GM12878 (cell line): ENCODE measurements at regions of chr3 and their contacts with region 1.

Region 1: DNA sequence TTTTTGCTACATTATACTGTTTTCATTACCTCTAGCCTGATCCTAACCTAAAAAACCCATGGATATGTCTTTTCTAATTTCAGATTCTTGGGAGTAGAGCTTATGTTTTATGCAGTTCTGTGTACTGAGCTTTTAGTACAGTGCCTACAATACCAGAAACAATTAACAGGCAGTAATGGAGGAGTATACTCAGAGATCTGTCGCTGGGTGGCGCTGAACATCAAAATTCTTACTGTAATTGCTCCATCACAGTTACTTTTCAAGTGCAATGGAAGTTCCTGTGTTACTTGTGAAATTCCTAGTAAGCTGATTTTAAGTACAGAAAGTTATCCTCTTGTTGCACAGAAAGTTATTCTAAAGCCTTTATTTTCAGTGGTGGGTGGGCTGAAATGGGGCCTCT is 66.9 kb downstream of the RNF13 start:
- DNase-seq: no peak
- ATAC-seq: peak; percentile 95
- H3K4me3 ChIP-seq: no peak overlapping the region
- H3K27ac ChIP-seq: no peak overlapping the region
- H3K4me1 ChIP-seq: no peaks in the 10 kb centered on the region
- H3K27me3 ChIP-seq: no peaks in the 10 kb centered on the region
- CTCF ChIP-seq: peak; percentile 43 to 59 (median 55); a peak in 5 of 6 replicates
- EP300 ChIP-seq: no peak
- POLR2A ChIP-seq: no peak
- RAD21 ChIP-seq: peak; percentile 30; the same call in 1 of the 2 replicates

Region 2: GRCh38 chr3:149867563-149867962 is 12.3 kb before region 1 on chr3:
- CTCF ChIA-PET with region 1: interaction called, 13 read pairs
- POLR2A ChIA-PET with region 1: no interaction called
- RAD21 ChIA-PET with region 1: no interaction called
- SMC1A ChIA-PET with region 1: interaction called, 5 read pairs
- in situ Hi-C with region 1: no loop called
- intact Hi-C with region 1: no loop called
- DNase-seq: no peak
- ATAC-seq: no peak
- H3K4me3 ChIP-seq: no peak overlapping the region
- H3K27ac ChIP-seq: no peak overlapping the region
- H3K4me1 ChIP-seq: no peaks in the 10 kb centered on the region
- H3K27me3 ChIP-seq: no peaks in the 10 kb centered on the region
- CTCF ChIP-seq: no peak
- EP300 ChIP-seq: no peak
- POLR2A ChIP-seq: no peak
- RAD21 ChIP-seq: no peak

Region 3: GRCh38 chr3:149894205-149894604 is 14.3 kb after region 1 on chr3:
- CTCF ChIA-PET with region 1: interaction called, 22 read pairs
- POLR2A ChIA-PET with region 1: interaction called, 6 read pairs
- RAD21 ChIA-PET with region 1: no interaction called
- SMC1A ChIA-PET with region 1: interaction called, 4 read pairs
- in situ Hi-C with region 1: no loop called
- intact Hi-C with region 1: no loop called
- DNase-seq: no peak
- ATAC-seq: no peak
- H3K4me3 ChIP-seq: no peak overlapping the region
- H3K27ac ChIP-seq: no peak overlapping the region
- H3K4me1 ChIP-seq: no peaks in the 10 kb centered on the region
- H3K27me3 ChIP-seq: no peaks in the 10 kb centered on the region
- CTCF ChIP-seq: no peak
- EP300 ChIP-seq: no peak
- POLR2A ChIP-seq: no peak
- RAD21 ChIP-seq: no peak

Region 4: DNA sequence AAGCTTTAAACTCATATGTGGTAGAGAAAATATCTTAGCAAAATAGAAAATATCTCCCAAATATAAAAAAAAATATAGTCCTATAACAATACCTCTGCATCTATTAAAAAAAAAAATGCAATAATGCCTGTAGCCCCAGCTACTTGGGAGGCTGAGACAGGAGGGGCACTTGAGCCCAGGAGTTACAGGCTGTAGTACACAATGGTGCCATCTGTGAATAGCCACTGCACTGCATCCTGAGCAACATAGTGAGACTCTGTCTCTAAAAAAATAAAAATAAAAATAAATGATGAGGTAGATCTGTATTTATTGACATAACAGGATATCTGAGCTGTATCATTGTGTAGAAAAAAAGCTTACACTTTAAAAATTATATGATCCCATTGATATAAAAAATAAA is 20.4 kb after region 1 on chr3:
- CTCF ChIA-PET with region 1: interaction called, 27 read pairs
- POLR2A ChIA-PET with region 1: no interaction called
- RAD21 ChIA-PET with region 1: interaction called, 6 read pairs
- SMC1A ChIA-PET with region 1: interaction called, 5 read pairs
- in situ Hi-C with region 1: no loop called
- intact Hi-C with region 1: no loop called
- DNase-seq: no peak
- ATAC-seq: no peak
- H3K4me3 ChIP-seq: no peak overlapping the region
- H3K27ac ChIP-seq: no peak overlapping the region
- H3K4me1 ChIP-seq: no peaks in the 10 kb centered on the region
- H3K27me3 ChIP-seq: no peaks in the 10 kb centered on the region
- CTCF ChIP-seq: no peak
- EP300 ChIP-seq: no peak
- POLR2A ChIP-seq: no peak
- RAD21 ChIP-seq: no peak

Region 5: DNA sequence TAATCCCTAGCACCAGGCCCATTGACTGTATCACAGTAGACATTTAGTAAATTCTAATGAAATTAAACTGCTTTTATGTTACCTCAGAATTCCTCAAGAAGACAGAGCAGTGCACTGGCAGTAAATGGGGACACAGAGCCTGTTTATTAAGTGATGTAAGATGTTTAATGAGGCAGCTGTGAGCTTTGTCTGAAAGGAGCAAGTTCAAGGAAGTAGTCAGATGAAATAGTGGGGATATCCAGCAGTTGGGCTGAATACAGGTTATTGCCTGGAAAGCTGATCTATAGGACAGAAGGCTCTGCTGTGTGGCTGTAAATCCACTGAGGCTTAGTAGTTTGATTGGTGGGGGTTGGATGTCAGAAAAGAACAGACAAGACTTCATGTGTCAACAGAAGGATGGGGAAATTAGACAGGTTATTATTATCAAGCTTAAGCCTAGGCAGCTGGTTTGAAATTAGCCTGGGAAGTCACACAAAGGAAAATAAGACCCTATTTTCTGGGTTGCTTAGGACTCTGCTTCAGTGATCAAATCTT is 28.6 kb after region 1 on chr3:
- CTCF ChIA-PET with region 1: interaction called, 27 read pairs
- POLR2A ChIA-PET with region 1: no interaction called
- RAD21 ChIA-PET with region 1: no interaction called
- SMC1A ChIA-PET with region 1: interaction called, 5 read pairs
- in situ Hi-C with region 1: no loop called
- intact Hi-C with region 1: no loop called
- DNase-seq: no peak
- ATAC-seq: no peak
- H3K4me3 ChIP-seq: no peak overlapping the region
- H3K27ac ChIP-seq: no peak overlapping the region
- H3K4me1 ChIP-seq: no peaks in the 10 kb centered on the region
- H3K27me3 ChIP-seq: no peaks in the 10 kb centered on the region
- CTCF ChIP-seq: no peak
- EP300 ChIP-seq: no peak
- POLR2A ChIP-seq: no peak
- RAD21 ChIP-seq: no peak

Region 6: GRCh38 chr3:149936812-149937233 is 57.0 kb after region 1 on chr3:
- CTCF ChIA-PET with region 1: interaction called, 23 read pairs
- POLR2A ChIA-PET with region 1: no interaction called
- RAD21 ChIA-PET with region 1: interaction called, 11 read pairs
- SMC1A ChIA-PET with region 1: interaction called, 3 read pairs
- in situ Hi-C with region 1: no loop called
- intact Hi-C with region 1: no loop called
- DNase-seq: peak; percentile 37
- ATAC-seq: peak; percentile 93
- H3K4me3 ChIP-seq: no peak overlapping the region
- H3K27ac ChIP-seq: no peak overlapping the region
- H3K4me1 ChIP-seq: no peaks in the 10 kb centered on the region
- H3K27me3 ChIP-seq: no peaks in the 10 kb centered on the region
- CTCF ChIP-seq: peak; percentile 79 to 87 (median 82)
- EP300 ChIP-seq: no peak
- POLR2A ChIP-seq: no peak
- RAD21 ChIP-seq: peak; percentile 80

Region 7: GRCh38 chr3:150216041-150216811 is 336.4 kb after region 1 on chr3:
- CTCF ChIA-PET with region 1: interaction called, 12 read pairs
- POLR2A ChIA-PET with region 1: no interaction called
- RAD21 ChIA-PET with region 1: interaction called, 3 read pairs
- SMC1A ChIA-PET with region 1: interaction called, 15 read pairs
- in situ Hi-C with region 1: no loop called
- intact Hi-C with region 1: loop called (anchors 5 kb)
- DNase-seq: no peak
- ATAC-seq: no peak; the same call in 1 of the 3 replicates
- H3K4me3 ChIP-seq: no peak overlapping the region
- H3K27ac ChIP-seq: no peak overlapping the region
- H3K4me1 ChIP-seq: no peaks in the 10 kb centered on the region
- H3K27me3 ChIP-seq: no peaks in the 10 kb centered on the region
- CTCF ChIP-seq: no peak
- EP300 ChIP-seq: no peak
- POLR2A ChIP-seq: no peak
- RAD21 ChIP-seq: no peak

Region 8: GRCh38 chr3:150972362-150973071 is 1092.6 kb after region 1 on chr3 and contains the start of gene CLRN1:
- CTCF ChIA-PET with region 1: no interaction called
- POLR2A ChIA-PET with region 1: no interaction called
- RAD21 ChIA-PET with region 1: no interaction called
- SMC1A ChIA-PET with region 1: no interaction called
- in situ Hi-C with region 1: no loop called
- intact Hi-C with region 1: no loop called
- DNase-seq: no peak
- ATAC-seq: no peak
- H3K4me3 ChIP-seq: no peak within 1 kb of the TSS
- H3K27ac ChIP-seq: no peak within 1 kb of the TSS
- H3K4me1 ChIP-seq: no peaks in the 10 kb centered on the region
- H3K27me3 ChIP-seq: no peaks in the 10 kb centered on the region; a peak in 1 of 4 replicates
- CTCF ChIP-seq: no peak
- EP300 ChIP-seq: no peak
- POLR2A ChIP-seq: no peak
- RAD21 ChIP-seq: no peak
- polyA plus RNA-seq, gene CLRN1: not detected